H1 (cell line): ENCODE measurements at regions of chr7 and their contacts with region 1.

Region 1: GRCh38 chr7:38060116-38060515 is 117.9 kb upstream of the STARD3NL start:
- DNase-seq: no peak
- H3K4me3 ChIP-seq: no peak overlapping the region
- H3K27ac ChIP-seq: no peak overlapping the region
- H3K4me1 ChIP-seq: no peaks in the 10 kb centered on the region
- H3K27me3 ChIP-seq: no peaks in the 10 kb centered on the region
- CTCF ChIP-seq: no peak
- EP300 ChIP-seq: no peak
- POLR2A ChIP-seq: no peak
- RAD21 ChIP-seq: no peak

Region 2: GRCh38 chr7:38070718-38071117 is 10.6 kb after region 1 on chr7:
- CTCF ChIA-PET with region 1: interaction called, 14 read pairs
- POLR2A ChIA-PET with region 1: no interaction called
- DNase-seq: no peak
- H3K4me3 ChIP-seq: peak overlapping the region in 1 of 4 experiments; percentile 19; a peak in 1 of 8 replicates
- H3K27ac ChIP-seq: no peak overlapping the region
- H3K4me1 ChIP-seq: peaks cover 0 to 2% (median under 1%) of the 10 kb centered on the region in 4 experiments; a peak in 3 of 7 replicates
- H3K27me3 ChIP-seq: peaks cover 0 to 1% (median 0%) of the 10 kb centered on the region in 4 experiments; a peak in 1 of 7 replicates
- CTCF ChIP-seq: peak in 2 of 3 experiments; percentile 49 to 81; a peak in 3 of 4 replicates
- EP300 ChIP-seq: no peak
- POLR2A ChIP-seq: no peak
- RAD21 ChIP-seq: peak in 1 of 2 experiments; percentile 39; a peak in 2 of 4 replicates